A673 (cell line): ENCODE measurements at regions of chr7 and their contacts with region 1.

Region 1: GRCh38 chr7:19117091-19117869 is at the start of gene TWIST1:
- DNase-seq: peak; percentile 89
- H3K4me3 ChIP-seq: peak within 1 kb of the TSS; percentile 96
- H3K27ac ChIP-seq: peak within 1 kb of the TSS; percentile 80
- H3K4me1 ChIP-seq: peaks cover 23% of the 10 kb centered on the region
- H3K27me3 ChIP-seq: no peaks in the 10 kb centered on the region
- CTCF ChIP-seq: no peak
- total RNA-seq, gene TWIST1: 37.6 and 41.6 TPM in 2 replicates

Region 2: GRCh38 chr7:18352339-18353255 is 764.7 kb before region 1 on chr7:
- CTCF ChIA-PET with region 1: interaction called, 5 read pairs
- POLR2A ChIA-PET with region 1: no interaction called
- intact Hi-C with region 1: loop called (anchors 5 kb)
- DNase-seq: peak; percentile 83
- H3K4me3 ChIP-seq: no peak overlapping the region
- H3K27ac ChIP-seq: peak overlapping the region; percentile 47
- H3K4me1 ChIP-seq: peaks cover 42% of the 10 kb centered on the region
- H3K27me3 ChIP-seq: no peaks in the 10 kb centered on the region
- CTCF ChIP-seq: peak; percentile 77

Region 3: DNA sequence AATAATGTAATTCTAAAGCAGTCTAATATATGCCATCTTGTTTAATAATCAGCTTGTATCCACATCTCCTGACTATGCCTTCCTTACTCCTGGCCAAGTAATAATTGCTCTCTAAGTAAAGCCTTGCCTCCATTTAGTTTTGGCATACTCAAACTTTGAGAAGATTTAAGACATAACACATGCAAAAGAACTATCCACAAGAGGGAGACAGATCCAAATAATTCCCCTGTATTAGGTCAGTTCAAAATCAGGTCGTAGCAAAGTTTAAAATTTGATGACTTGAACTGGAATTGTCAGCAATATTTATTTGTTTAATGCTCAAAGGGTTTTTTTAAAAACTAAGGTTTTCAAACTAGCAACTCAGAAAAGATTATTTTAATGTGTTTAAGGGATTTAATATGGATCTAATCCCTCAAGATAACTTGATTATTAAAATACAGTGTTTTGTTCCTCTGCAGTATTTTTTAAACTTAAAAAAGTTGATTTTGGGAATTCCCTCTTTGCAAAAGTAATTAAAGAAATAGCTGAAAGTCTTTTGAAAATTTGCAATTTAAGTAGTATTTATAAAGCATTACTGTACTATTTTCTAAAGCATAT is 526.4 kb before region 1 on chr7:
- CTCF ChIA-PET with region 1: interaction called, 4 read pairs
- POLR2A ChIA-PET with region 1: no interaction called
- intact Hi-C with region 1: loop called (anchors 5 kb)
- DNase-seq: peak; percentile 77
- H3K4me3 ChIP-seq: no peak overlapping the region
- H3K27ac ChIP-seq: peak overlapping the region; percentile 53
- H3K4me1 ChIP-seq: peaks cover 15% of the 10 kb centered on the region
- H3K27me3 ChIP-seq: no peaks in the 10 kb centered on the region
- CTCF ChIP-seq: peak; percentile 84

Region 4: GRCh38 chr7:18693406-18693805 is 423.9 kb before region 1 on chr7:
- CTCF ChIA-PET with region 1: no interaction called
- POLR2A ChIA-PET with region 1: no interaction called
- intact Hi-C with region 1: loop called (anchors 5 kb)
- DNase-seq: peak; percentile 77
- H3K4me3 ChIP-seq: no peak overlapping the region
- H3K27ac ChIP-seq: no peak overlapping the region
- H3K4me1 ChIP-seq: peaks cover 18% of the 10 kb centered on the region
- H3K27me3 ChIP-seq: no peaks in the 10 kb centered on the region
- CTCF ChIP-seq: peak; percentile 75

Region 5: DNA sequence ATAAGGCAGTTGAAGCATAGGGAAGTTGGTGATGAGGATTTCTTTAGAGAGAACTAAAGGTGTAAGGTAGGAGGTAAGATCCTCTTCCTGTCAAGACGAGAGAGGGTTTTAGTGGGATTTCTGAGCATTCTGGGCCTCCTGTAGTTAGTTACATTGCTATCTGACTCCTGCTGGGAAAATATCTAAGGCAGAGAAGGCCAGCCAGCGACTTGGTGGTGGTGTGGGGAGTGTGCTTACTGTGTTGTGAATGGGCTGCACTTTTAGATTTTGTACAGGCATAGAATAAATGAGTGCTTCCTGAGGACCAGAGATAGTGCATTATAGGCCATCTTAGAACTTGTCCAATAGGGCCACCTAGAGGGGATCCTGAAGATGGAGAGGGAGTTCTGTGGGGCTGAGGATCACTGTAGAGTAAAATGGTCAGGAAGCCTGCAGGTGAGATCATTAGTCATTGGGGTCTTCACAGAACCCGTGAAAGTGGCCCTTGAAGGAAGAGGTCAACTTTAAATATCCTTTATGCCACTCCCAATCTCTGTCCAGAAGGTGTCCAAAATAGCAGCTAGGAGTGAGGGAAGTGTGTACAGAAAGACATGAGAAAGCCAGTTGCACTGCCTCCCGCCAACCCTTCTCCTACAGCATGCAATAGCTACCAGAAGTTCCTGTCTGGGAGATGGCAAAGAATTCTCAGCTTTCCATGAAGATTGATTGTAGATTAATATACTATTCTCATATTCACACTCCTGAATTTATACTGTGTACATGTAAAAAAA is 324.9 kb after region 1 on chr7:
- CTCF ChIA-PET with region 1: interaction called, 7 read pairs
- POLR2A ChIA-PET with region 1: no interaction called
- intact Hi-C with region 1: loop called (anchors 2 kb)
- DNase-seq: peak; percentile 63
- H3K4me3 ChIP-seq: no peak overlapping the region
- H3K27ac ChIP-seq: no peak overlapping the region
- H3K4me1 ChIP-seq: no peaks in the 10 kb centered on the region
- H3K27me3 ChIP-seq: no peaks in the 10 kb centered on the region
- CTCF ChIP-seq: peak; percentile 65

Region 6: DNA sequence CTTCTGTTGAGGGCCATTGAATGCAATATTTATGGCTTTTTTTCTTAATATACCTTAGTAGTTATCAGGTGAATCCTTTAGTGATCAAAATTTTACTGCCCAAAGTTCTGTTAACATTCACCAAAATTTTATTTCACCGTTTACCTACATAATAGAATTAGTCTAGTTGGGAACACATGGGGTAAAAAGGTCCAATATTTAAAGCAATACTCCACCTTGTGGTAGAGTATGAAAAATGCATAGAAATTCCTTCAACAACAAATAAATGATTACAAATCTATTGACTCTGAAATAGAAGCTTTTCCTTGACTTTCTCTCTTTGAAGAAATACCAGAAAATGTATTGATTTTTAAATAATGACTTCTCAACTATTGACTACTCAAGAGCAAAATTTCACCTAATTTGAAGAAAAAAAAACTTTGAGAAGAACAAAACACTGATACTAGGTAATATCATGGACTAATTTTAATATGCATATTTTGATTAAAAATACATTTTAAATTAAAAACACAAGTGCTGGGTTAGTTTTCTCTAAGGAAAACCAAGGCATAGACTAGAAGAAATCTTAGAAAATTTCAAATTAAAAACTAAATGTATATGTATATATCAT is 548.2 kb after region 1 on chr7:
- CTCF ChIA-PET with region 1: no interaction called
- POLR2A ChIA-PET with region 1: no interaction called
- intact Hi-C with region 1: loop called (anchors 2 kb)
- DNase-seq: peak; percentile 52
- H3K4me3 ChIP-seq: no peak overlapping the region
- H3K27ac ChIP-seq: no peak overlapping the region
- H3K4me1 ChIP-seq: no peaks in the 10 kb centered on the region
- H3K27me3 ChIP-seq: peaks cover 10% of the 10 kb centered on the region
- CTCF ChIP-seq: peak; percentile 75